ENCODE measurements at regions of chr10 and their contacts with region 1.

Region 1: GRCh38 chr10:91210435-91210834 is 10.0 kb upstream of the PCGF5 start:
- DNase-seq: peak; percentile 80
- H3K4me3 ChIP-seq: no peak overlapping the region
- H3K27ac ChIP-seq: peak overlapping the region; percentile 5
- H3K4me1 ChIP-seq: peaks cover 3% of the 10 kb centered on the region
- H3K27me3 ChIP-seq: no peaks in the 10 kb centered on the region
- CTCF ChIP-seq: no peak

Region 2: GRCh38 chr10:91163269-91163868 is 47.1 kb before region 1 on chr10:
- intact Hi-C with region 1: loop called (anchors 10 kb)
- DNase-seq: peak; percentile 55
- H3K4me3 ChIP-seq: peak overlapping the region; percentile 89
- H3K27ac ChIP-seq: peak overlapping the region; percentile 91
- H3K4me1 ChIP-seq: no peaks in the 10 kb centered on the region
- H3K27me3 ChIP-seq: no peaks in the 10 kb centered on the region
- CTCF ChIP-seq: no peak

Region 3: DNA sequence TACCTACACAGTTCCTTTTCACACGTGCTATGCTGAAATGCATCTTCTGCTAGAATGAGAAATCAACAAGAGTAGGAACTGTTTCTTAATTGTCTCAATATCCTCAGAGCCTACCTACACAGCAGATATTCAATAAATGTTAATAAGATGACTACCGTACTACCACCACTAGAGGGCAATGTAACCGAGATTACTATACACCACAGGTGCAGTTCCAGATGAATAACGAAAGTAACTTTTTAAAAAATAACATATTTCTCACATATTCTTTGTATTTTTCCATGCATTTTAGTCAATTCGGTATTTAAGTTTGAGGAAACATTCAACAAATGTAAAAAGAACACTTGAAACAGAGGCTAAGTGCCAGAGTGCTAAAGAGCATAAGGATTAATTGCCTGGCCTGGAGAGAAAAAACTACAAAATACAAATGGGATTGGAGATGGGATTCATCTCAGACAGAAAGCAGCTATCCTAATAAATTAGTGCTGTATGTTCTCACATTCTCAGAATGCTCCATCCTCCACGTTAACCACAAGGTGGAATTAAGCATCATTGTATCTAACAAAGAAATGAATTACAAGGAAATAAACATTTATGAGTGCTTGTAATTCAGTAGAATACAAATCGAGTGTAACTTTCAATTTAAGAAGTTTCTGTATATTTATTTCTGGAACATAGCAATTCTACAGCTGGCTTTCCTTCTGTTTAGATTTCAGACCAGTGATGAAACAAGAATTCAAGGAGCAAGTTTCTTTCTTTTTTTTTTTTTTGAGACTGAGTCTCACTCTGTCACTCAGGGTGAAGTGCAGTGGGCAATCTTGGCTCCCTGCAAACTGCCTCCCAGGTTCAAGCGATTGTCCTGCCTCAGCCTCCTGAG is 179.4 kb after region 1 on chr10:
- intact Hi-C with region 1: no loop called
- DNase-seq: peak; percentile 21
- H3K4me3 ChIP-seq: no peak overlapping the region
- H3K27ac ChIP-seq: no peak overlapping the region
- H3K4me1 ChIP-seq: peaks cover 3% of the 10 kb centered on the region
- H3K27me3 ChIP-seq: no peaks in the 10 kb centered on the region
- CTCF ChIP-seq: peak; percentile 62

Measured in colonic mucosa (tissue), 4 donors.